OCI-LY7 (cell line): ENCODE measurements at regions of chr6 and their contacts with region 1.

Region 1: GRCh38 chr6:18387061-18387721 is at the start of gene RNF144B:
- DNase-seq: peak; percentile 97
- H3K4me3 ChIP-seq: peak within 1 kb of the TSS; percentile 98
- H3K27ac ChIP-seq: peak within 1 kb of the TSS; percentile 75
- H3K4me1 ChIP-seq: peaks cover 59% of the 10 kb centered on the region
- CTCF ChIP-seq: no peak
- total RNA-seq, gene RNF144B: 83.4 and 87.9 TPM in 2 replicates

Region 2: DNA sequence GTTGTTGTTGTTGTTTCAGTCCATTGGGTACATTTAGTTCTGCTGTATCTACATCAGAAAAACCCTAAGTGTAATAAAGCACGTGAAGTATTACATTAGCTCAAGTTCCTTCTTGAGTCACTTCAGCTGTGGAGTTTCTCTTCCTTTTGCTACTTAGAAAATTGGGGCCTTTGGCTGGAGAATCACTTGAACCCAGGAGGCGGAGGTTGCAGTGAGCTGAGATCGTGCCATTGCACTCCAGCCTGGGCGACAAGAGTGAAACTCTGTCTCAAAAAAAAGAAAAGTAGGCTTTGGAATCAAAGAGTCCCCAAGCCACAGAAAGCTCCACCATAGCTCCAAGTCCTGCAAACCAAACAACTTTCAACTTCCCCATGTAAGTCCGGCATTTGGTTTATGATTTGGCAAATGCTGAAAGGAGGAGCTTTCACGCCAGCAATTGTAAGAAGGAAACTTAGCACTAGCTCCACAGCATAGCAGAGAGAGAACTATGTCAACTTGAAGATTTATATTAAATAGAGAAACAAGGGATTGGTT is 56.6 kb before region 1 on chr6:
- CTCF ChIA-PET with region 1: interaction called, 3 read pairs
- POLR2A ChIA-PET with region 1: interaction called, 128 read pairs
- intact Hi-C with region 1: loop called (anchors 1 kb)
- DNase-seq: peak; percentile 70
- H3K4me3 ChIP-seq: peak overlapping the region; percentile 50
- H3K27ac ChIP-seq: peak overlapping the region; percentile 92
- H3K4me1 ChIP-seq: peaks cover 62% of the 10 kb centered on the region
- CTCF ChIP-seq: no peak

Region 3: DNA sequence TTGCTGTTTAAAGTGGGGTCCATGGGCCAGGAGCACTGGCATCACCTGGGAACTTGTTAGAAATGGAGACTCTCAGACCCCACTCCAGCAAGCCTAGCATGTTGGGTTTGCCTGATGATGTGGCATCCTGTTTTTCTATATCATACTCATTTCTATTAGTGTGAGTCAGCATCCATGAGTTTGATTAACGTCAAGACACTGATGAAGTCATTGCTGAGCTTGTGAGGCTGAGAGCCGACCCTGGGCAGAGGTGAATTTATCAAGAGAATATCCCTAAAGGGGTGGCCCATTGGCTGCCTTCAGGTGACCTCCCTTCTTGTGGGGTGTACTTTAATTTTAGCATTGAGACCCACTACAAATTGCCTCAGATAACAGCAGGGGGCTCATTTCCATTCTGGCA is 43.5 kb before region 1 on chr6:
- CTCF ChIA-PET with region 1: interaction called, 6 read pairs
- POLR2A ChIA-PET with region 1: interaction called, 32 read pairs
- intact Hi-C with region 1: loop called (anchors 1 kb)
- DNase-seq: no peak
- H3K4me3 ChIP-seq: peak overlapping the region; percentile 26
- H3K27ac ChIP-seq: peak overlapping the region; percentile 89
- H3K4me1 ChIP-seq: peaks cover 72% of the 10 kb centered on the region
- CTCF ChIP-seq: peak; percentile 44; the same call in 1 of the 2 replicates

Region 4: GRCh38 chr6:18359237-18359885 is 27.8 kb before region 1 on chr6:
- CTCF ChIA-PET with region 1: interaction called, 12 read pairs
- POLR2A ChIA-PET with region 1: interaction called, 160 read pairs
- intact Hi-C with region 1: loop called (anchors 1 kb)
- DNase-seq: peak; percentile 97
- H3K4me3 ChIP-seq: peak overlapping the region; percentile 53
- H3K27ac ChIP-seq: peak overlapping the region; percentile 100
- H3K4me1 ChIP-seq: peaks cover 58% of the 10 kb centered on the region
- CTCF ChIP-seq: 0 out of 2 replicates have a peak, but pooled peaks have one; percentile 12

Region 5: GRCh38 chr6:18400831-18401446 is 13.7 kb after region 1 on chr6:
- CTCF ChIA-PET with region 1: no interaction called
- POLR2A ChIA-PET with region 1: interaction called, 35 read pairs
- intact Hi-C with region 1: no loop called
- DNase-seq: peak; percentile 42
- H3K4me3 ChIP-seq: no peak overlapping the region
- H3K27ac ChIP-seq: peak overlapping the region; percentile 56
- H3K4me1 ChIP-seq: peaks cover 53% of the 10 kb centered on the region
- CTCF ChIP-seq: no peak